HEK293T (cell line): ENCODE measurements at regions of chr1 and their contacts with region 1.

Region 1: GRCh38 chr1:207454046-207454964 is at the start of gene CR2:
- DNase-seq: peak; percentile 61

Region 2: DNA sequence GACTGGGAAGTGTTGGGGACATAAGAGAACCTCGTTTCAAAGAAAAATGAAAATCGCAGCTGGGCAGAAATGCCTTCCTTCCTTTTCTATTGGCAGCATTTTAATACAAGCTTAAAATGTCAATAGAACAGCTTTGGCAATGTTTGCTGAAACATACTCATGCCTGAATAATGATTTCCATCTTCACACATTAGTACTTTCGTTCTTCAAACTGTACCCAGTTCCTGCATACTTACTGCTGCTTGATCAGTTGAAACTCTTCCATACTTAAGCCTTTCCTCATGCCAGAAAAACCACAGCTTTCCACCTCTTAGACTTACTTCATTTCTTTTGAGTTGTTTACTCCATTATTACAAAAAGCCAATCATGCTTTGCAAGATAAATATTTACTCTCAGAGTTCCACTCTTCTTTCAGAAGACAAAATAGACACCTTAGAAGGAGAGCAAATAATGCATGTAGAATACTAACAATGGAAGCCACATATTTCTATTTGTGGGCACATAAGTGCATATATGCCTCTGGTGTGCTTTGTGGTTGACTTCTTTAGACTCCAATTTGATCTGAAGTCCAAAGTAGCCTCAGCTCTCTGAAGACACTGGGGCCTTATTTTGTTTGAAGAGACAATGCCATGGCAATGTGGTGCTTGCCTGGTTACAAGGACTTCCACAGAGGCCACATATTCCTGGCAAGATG is 155.5 kb before region 1 on chr1:
- CTCF ChIA-PET with region 1: no interaction called
- POLR2A ChIA-PET with region 1: no interaction called
- DNase-seq: no peak

Region 3: GRCh38 chr1:207414606-207415108 is 39.6 kb before region 1 on chr1:
- CTCF ChIA-PET with region 1: no interaction called
- POLR2A ChIA-PET with region 1: no interaction called
- DNase-seq: no peak

Region 4: GRCh38 chr1:207440626-207441025 is 13.7 kb before region 1 on chr1:
- CTCF ChIA-PET with region 1: no interaction called
- POLR2A ChIA-PET with region 1: no interaction called
- DNase-seq: no peak

Region 5: DNA sequence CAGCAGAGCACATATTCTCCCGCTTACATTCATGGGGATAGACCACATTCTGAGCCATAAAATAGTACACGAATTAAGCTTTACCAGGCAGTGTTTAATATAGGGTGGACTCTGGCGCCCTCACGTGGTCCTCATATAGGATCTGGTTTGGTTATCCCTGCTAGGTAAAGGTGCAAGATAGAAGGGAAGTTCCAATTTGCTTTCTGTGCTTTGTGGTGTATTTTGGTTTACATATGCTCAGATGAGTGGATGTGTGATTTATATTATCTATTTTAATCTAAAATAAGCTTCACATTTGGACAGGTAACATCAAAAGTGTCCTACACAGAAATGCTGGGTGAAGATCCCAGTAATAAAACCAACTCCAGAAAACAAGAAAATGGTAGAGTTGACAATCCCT is 45.3 kb after region 1 on chr1:
- CTCF ChIA-PET with region 1: interaction called, 11 read pairs
- POLR2A ChIA-PET with region 1: interaction called, 3 read pairs
- DNase-seq: peak; percentile 58